ENCODE measurements at regions of chr16 and their contacts with region 1.

Region 1: GRCh38 chr16:53503270-53503923 is 388 bp upstream of the AKTIP start:
- DNase-seq: peak; percentile 100
- H3K4me3 ChIP-seq: peak overlapping the region in 2 of 3 experiments; percentile 24 to 97
- H3K27ac ChIP-seq: peak overlapping the region; percentile 92
- H3K4me1 ChIP-seq: peaks cover 29% of the 10 kb centered on the region
- H3K27me3 ChIP-seq: no peaks in the 10 kb centered on the region
- CTCF ChIP-seq: no peak
- POLR2A ChIP-seq: peak; percentile 85

Region 2: DNA sequence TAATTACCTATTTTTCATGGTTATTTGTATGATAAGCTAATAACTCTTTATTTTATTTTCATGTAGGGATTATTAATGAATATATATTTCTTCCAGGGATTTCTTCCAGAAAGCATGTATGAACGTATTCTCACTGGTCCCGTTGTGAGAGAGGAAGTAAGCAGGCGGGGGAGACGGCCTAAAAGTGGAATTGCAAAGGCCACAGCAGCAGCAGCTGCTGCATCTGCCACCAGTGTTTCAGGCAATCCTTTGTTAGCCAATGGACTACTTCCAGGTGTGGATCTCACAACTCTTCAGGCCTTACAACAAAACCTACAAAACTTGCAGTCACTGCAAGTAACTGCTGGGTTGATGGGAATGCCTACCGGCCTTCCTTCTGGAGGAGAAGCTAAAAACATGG is 179.5 kb before region 1 on chr16:
- CTCF ChIA-PET with region 1: no interaction called
- POLR2A ChIA-PET with region 1: no interaction called
- dilution Hi-C with region 1: no loop called
- intact Hi-C with region 1: loop called (anchors 5 kb)
- DNase-seq: no peak
- H3K4me3 ChIP-seq: no peak overlapping the region
- H3K27ac ChIP-seq: no peak overlapping the region
- H3K4me1 ChIP-seq: no peaks in the 10 kb centered on the region
- H3K27me3 ChIP-seq: no peaks in the 10 kb centered on the region
- CTCF ChIP-seq: no peak
- POLR2A ChIP-seq: no peak

Region 3: GRCh38 chr16:53435066-53435688 is 68.2 kb before region 1 on chr16:
- CTCF ChIA-PET with region 1: no interaction called
- POLR2A ChIA-PET with region 1: no interaction called
- dilution Hi-C with region 1: no loop called
- intact Hi-C with region 1: loop called (anchors 1 kb)
- DNase-seq: peak; percentile 93
- H3K4me3 ChIP-seq: peak overlapping the region; percentile 81 to 90 (median 81)
- H3K27ac ChIP-seq: peak overlapping the region; percentile 78
- H3K4me1 ChIP-seq: peaks cover 5% of the 10 kb centered on the region
- H3K27me3 ChIP-seq: no peaks in the 10 kb centered on the region
- CTCF ChIP-seq: no peak
- POLR2A ChIP-seq: peak; percentile 37

Region 4: GRCh38 chr16:53482123-53482522 is 21.3 kb before region 1 on chr16:
- CTCF ChIA-PET with region 1: interaction called, 3 read pairs
- POLR2A ChIA-PET with region 1: no interaction called
- dilution Hi-C with region 1: no loop called
- intact Hi-C with region 1: loop called (anchors 2 kb)
- DNase-seq: peak; percentile 61
- H3K4me3 ChIP-seq: no peak overlapping the region
- H3K27ac ChIP-seq: peak overlapping the region; percentile 31
- H3K4me1 ChIP-seq: peaks cover 10% of the 10 kb centered on the region
- H3K27me3 ChIP-seq: no peaks in the 10 kb centered on the region
- CTCF ChIP-seq: no peak
- POLR2A ChIP-seq: no peak

Region 5: DNA sequence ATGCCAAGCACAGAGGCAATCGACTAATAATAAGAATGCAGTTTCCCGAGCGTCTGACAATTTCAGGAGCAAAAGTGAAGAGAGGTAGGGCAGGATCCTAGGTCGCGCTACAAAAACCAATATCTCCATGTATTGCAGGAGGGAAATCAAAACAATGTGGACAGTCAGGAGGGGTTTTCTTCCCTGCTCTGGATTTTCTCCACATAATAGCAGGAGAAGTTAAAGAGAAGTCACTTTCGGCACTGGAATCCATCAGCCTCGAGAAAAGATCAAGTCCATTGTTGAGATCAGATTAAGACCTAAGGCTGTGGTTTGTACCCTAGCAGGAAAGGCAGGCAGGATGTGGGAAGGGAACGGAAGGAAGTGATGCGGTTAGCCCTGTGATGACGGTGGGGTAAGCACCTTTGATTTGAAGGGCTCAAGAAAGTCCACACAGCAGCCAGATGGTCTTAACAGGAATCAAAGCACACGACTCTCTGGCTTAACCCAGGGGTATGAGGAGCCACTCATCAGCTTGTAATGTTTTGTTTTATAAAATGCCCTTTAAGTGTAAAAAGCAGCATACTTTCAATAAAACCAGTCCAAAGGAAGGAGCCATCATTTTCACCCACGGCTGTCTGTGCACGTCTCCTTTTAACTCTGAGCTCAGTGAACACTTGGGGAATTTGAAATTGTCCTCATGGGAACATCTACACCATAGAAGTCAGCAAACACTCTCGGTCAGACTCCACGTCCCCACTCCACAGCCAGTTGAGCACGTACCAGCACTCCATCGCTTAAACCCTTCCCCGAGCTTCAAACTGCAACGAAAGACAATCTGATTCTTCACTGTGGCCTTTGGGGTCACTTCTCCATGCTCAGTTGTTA is 15.4 kb after region 1 on chr16:
- CTCF ChIA-PET with region 1: interaction called, 3 read pairs
- POLR2A ChIA-PET with region 1: interaction called, 5 read pairs
- dilution Hi-C with region 1: no loop called
- intact Hi-C with region 1: loop called (anchors 1 kb)
- DNase-seq: peak; percentile 92
- H3K4me3 ChIP-seq: peak overlapping the region in 1 of 3 experiments; percentile 51
- H3K27ac ChIP-seq: peak overlapping the region; percentile 97
- H3K4me1 ChIP-seq: peaks cover 39% of the 10 kb centered on the region
- H3K27me3 ChIP-seq: no peaks in the 10 kb centered on the region
- CTCF ChIP-seq: no peak
- POLR2A ChIP-seq: peak; percentile 73

Region 6: DNA sequence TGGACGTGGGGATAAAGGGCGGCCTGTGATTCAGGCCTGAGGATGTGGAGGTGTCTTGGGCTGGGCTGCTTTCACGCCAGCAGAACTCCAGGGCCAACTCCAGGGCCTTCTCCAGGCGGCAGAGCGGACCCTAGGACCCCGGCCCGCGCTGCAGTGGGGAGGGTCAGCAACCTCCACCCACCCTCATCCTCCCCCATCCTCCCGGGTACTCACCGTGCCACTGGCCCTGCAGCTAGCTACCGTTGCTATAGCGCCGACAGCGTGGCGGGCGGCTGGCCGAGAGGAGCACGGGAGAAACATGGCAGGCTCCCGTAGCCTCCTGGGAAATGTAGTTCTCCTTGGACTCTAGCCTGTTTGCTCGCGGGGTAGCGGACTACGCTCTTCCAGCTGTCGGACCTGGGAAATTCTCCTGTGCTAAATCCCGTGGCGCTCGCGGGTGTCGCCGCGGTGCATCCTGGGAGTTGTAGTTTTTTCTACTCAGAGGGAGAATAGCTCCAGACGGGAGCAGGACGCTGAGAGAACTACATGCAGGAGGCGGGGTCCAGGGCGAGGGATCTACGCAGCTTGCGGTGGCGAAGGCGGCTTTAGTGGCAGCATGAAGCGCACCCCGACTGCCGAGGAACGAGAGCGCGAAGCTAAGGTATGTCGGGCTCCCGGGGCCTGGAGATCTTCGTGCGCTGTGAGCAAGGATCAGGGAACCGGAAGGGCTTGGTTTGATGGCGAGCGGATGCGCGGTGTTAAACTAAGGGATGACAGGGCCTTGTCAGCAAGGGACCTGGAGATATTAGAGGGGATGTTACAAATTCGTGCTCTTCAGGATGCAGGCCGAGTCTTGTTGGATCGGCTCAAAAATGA is 200.4 kb after region 1 on chr16 and contains the starts of genes FTO and RPGRIP1L:
- CTCF ChIA-PET with region 1: no interaction called
- POLR2A ChIA-PET with region 1: interaction called, 3 read pairs
- dilution Hi-C with region 1: no loop called
- intact Hi-C with region 1: loop called (anchors 5 kb)
- DNase-seq: peak; percentile 100
- H3K4me3 ChIP-seq: peak within 1 kb of the TSS; percentile 42 to 88 (median 87)
- H3K27ac ChIP-seq: peak within 1 kb of the TSS; percentile 36
- H3K4me1 ChIP-seq: peaks cover 3% of the 10 kb centered on the region
- H3K27me3 ChIP-seq: no peaks in the 10 kb centered on the region
- CTCF ChIP-seq: no peak
- POLR2A ChIP-seq: no peak
- total RNA-seq, gene FTO: 77.8 and 87.1 TPM in 2 replicates
- total RNA-seq, gene RPGRIP1L: 9.7 and 13.2 TPM in 2 replicates

Measured in endothelial cell of umbilical vein (primary cell).